Ovary (tissue), 10 donors: ENCODE measurements at regions of chr5 and their contacts with region 1.

Region 1: GRCh38 chr5:126531543-126532120 is 63.4 kb downstream of the ALDH7A1 start:
- DNase-seq: no peak
- H3K4me3 ChIP-seq: no peak overlapping the region
- H3K27ac ChIP-seq: peak overlapping the region in 1 of 2 donors; percentile 74
- H3K4me1 ChIP-seq: peaks cover 3% of the 10 kb centered on the region
- H3K27me3 ChIP-seq: no peaks in the 10 kb centered on the region
- CTCF ChIP-seq: no peak
- EP300 ChIP-seq: no peak
- POLR2A ChIP-seq: no peak

Region 2: DNA sequence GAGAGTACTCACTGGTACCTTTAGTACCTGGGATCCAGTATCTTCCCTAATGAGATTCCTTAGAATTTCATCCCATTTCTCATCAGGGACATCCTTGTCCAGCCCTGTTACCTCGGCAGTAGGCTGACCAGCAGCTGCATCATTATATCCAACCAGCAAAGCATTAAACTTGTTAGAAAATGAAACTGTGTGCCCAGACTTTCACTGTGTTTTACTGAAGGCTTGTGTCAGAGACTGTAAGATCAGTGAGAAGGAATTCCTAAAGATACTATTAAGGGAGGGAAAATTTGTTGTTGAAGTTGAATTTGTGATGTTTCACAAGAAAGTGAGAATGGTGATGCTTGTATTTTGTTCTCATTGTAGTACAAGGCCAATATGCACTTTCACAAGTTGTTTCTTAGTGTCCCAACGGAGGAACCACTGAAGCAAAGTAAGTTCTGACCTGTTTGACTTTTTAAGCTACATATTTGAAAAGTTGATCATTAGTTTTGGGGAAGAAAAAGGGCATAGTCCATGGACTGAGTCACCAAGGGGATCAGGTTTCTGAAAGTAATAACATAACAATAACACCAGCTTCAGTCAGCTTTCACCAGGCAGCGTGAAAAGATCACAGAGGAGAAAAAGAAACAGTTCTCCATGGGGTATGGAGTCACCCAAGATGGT is 59.6 kb before region 1 on chr5:
- intact Hi-C with region 1: loop called in 1 of 4 experiments (anchors 10 kb)
- DNase-seq: no peak
- H3K4me3 ChIP-seq: no peak overlapping the region
- H3K27ac ChIP-seq: peak overlapping the region; percentile 16 to 21
- H3K4me1 ChIP-seq: peaks cover 21% of the 10 kb centered on the region
- H3K27me3 ChIP-seq: no peaks in the 10 kb centered on the region
- CTCF ChIP-seq: no peak
- EP300 ChIP-seq: no peak
- POLR2A ChIP-seq: no peak

Region 3: DNA sequence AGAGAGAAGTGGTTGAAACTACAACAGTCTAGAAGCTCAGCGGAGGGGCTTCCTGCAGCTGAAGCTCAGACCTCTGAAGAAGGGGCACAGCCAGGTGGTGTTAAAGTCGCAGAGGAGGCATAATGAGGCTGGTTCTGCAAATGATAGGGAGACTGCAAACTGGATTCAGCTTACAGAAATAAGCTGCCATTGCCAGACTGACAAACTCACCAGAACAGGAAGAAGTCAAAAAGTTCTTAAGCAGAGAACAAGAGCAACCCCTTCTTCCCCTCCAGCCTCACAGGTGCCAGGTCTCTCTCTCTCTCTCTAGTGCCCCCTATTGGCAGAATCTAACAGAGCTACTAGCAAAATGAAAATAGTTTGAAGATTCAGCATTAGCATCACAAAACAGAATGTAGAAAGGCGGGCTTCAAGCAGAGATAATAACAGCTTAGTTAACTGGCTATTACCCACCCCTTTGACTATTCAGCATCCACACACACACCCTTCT is 31.7 kb before region 1 on chr5:
- intact Hi-C with region 1: loop called in 2 of 4 experiments (anchors 5 kb)
- DNase-seq: no peak
- H3K4me3 ChIP-seq: no peak overlapping the region
- H3K27ac ChIP-seq: peak overlapping the region; percentile 31 to 51
- H3K4me1 ChIP-seq: peaks cover 17% of the 10 kb centered on the region
- H3K27me3 ChIP-seq: no peaks in the 10 kb centered on the region
- CTCF ChIP-seq: no peak
- EP300 ChIP-seq: no peak
- POLR2A ChIP-seq: no peak